Activated naive CD4-positive, alpha-beta T cell treated with anti-CD3 and anti-CD28 coated beads for 36 hours (primary cell): ENCODE measurements at regions of chrX and their contacts with region 1.

Region 1: GRCh38 chrX:112678831-112679230 is 907 bp downstream of the LHFPL1 start:
- DNase-seq: no peak
- H3K4me3 Mint-ChIP-seq: peak overlapping the region; percentile 73
- H3K27ac Mint-ChIP-seq: peak overlapping the region; percentile 83
- H3K4me1 Mint-ChIP-seq: peaks cover 32% of the 10 kb centered on the region
- H3K27me3 Mint-ChIP-seq: no peaks in the 10 kb centered on the region

Region 2: DNA sequence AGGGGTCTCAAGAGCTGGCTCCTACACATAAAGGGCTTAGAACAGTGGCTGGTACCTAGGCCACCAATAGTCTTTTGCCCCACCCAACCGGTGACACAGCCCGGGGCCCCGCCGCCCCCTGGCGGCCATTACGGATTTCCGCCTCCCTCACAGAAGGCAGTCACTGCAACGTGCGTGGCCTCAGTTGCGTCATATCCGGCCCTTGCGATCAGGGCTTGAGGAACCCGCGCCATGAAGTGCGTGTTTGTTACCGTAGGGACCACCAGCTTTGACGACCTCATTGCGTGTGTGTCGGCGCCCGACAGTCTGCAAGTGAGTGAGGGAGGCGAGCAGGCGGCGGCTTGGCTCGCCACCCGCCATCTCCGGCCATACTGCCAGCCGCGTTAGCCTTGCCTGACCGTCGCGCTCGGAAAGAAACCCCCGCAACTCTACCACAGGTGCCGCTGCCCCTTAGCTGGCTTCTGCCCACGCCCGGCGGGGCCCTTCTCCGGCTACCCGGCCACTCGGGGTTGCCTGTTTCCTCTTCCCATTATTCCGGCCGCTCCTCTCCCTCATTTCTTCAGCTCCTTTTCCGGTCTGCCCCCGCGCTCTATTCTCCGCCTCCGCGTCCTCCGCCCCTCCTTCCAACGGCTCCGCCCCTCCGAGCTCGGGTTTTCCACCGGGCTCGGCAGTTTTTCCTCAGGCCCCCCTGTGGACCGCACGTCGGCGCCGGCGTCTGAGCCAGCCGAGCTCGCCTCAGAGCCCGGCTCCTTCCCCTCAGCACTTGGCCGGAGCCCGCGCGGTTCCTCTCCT is 997.6 kb before region 1 on chrX and contains the start of gene ALG13:
- CTCF ChIA-PET with region 1: no interaction called
- intact Hi-C with region 1: loop called (anchors 10 kb)
- DNase-seq: peak; percentile 89
- H3K4me3 Mint-ChIP-seq: peak within 1 kb of the TSS; percentile 84
- H3K27ac Mint-ChIP-seq: peak within 1 kb of the TSS; percentile 92
- H3K4me1 Mint-ChIP-seq: peaks cover 26% of the 10 kb centered on the region
- H3K27me3 Mint-ChIP-seq: no peaks in the 10 kb centered on the region
- total RNA-seq, gene ALG13: 44.7 to 47.8 TPM

Region 3: GRCh38 chrX:112642349-112642748 is 36.5 kb before region 1 on chrX:
- CTCF ChIA-PET with region 1: interaction called, 4 read pairs
- intact Hi-C with region 1: loop called (anchors 1 kb)
- DNase-seq: peak; percentile 42
- H3K4me3 Mint-ChIP-seq: no peak overlapping the region
- H3K27ac Mint-ChIP-seq: no peak overlapping the region
- H3K4me1 Mint-ChIP-seq: peaks cover 20% of the 10 kb centered on the region
- H3K27me3 Mint-ChIP-seq: no peaks in the 10 kb centered on the region

Region 4: DNA sequence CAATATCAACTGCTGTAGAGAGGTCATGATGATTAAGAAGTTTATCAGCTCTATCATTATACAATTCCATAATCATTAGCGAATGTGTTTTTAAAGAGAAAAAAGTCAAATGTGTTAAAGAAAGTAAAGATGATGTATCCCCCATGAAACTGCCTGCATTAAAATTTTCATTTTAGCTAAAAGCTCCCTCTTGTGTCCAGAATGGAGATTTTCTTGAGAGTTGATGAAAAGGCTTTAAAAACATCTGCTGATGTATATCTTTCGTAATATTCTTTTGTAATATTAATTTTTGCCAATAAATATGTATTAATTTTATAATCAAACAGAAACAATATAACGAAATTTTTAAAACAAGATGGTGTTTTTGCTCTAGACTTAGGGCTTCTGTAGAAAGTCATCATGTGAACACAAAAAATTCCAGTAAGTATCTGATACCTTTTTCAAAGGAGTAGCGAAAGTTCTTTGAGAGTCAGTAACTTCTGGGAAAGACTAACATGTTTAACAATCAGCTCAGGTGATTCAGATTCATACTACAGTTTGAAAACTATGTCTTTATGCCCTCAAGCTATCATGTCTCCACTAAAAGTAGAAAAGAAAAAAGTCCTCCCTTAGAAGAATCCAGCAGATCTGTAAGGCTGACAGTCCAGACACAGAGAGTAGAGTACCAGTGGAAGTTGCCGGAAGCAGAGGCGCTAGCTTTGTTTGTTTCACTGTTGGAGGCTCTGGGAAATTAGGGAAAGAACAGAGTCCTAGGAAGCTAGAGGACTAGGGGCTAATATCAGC is 53.2 kb after region 1 on chrX:
- CTCF ChIA-PET with region 1: no interaction called
- intact Hi-C with region 1: loop called (anchors 5 kb)
- DNase-seq: no peak
- H3K4me3 Mint-ChIP-seq: no peak overlapping the region
- H3K27ac Mint-ChIP-seq: no peak overlapping the region
- H3K4me1 Mint-ChIP-seq: peaks cover 3% of the 10 kb centered on the region
- H3K27me3 Mint-ChIP-seq: no peaks in the 10 kb centered on the region

Region 5: DNA sequence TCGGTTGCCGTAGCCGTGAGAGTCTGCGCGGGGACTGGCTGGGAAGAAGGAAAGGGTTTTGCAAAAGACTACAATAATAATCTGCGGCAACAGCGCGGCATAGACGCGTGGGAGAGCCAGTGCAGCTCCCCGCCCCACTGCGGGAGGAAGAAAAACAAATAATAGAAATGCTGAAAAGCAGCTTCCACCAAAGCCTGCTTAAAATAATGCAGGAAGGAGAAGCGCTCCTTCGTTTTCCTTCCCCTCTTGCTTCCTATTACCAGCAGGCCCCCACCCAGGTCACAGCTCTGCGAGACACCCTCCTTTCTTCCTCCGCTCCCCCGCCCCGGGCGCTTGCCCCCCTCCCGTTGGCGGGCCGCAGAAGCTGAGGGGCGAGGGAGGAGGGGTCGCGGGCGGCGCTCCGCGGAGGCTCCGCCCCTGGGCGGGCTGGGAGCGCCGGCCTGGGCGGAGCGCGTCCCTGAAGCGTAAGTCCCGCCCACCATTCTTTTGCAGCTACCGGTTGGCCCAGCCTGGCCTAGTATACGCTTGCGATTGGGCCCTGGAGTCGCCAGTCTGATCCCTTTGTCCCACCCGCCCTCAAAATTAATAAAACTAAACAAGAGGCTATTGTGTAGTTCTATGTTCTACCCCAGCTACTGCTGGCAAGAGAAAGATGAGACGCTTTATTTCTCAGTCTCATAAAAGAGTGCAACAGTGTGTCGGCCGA is 162.4 kb after region 1 on chrX:
- CTCF ChIA-PET with region 1: no interaction called
- intact Hi-C with region 1: loop called (anchors 2 kb)
- DNase-seq: peak; percentile 77
- H3K4me3 Mint-ChIP-seq: peak overlapping the region; percentile 80
- H3K27ac Mint-ChIP-seq: no peak overlapping the region
- H3K4me1 Mint-ChIP-seq: peaks cover 11% of the 10 kb centered on the region
- H3K27me3 Mint-ChIP-seq: no peaks in the 10 kb centered on the region

Region 6: GRCh38 chrX:113492895-113493294 is 814.1 kb after region 1 on chrX:
- CTCF ChIA-PET with region 1: no interaction called
- intact Hi-C with region 1: no loop called
- DNase-seq: no peak
- H3K4me3 Mint-ChIP-seq: no peak overlapping the region
- H3K27ac Mint-ChIP-seq: no peak overlapping the region
- H3K4me1 Mint-ChIP-seq: no peaks in the 10 kb centered on the region
- H3K27me3 Mint-ChIP-seq: no peaks in the 10 kb centered on the region